ENCODE measurements at regions of chr14 and their contacts with region 1.

Region 1: GRCh38 chr14:51780006-51780692 is 80.3 kb upstream of the GNG2 start:
- DNase-seq: peak; percentile 51 to 87 (median 65)
- ATAC-seq: peak; percentile 71
- H3K4me3 ChIP-seq: no peak overlapping the region
- H3K4me3 Mint-ChIP-seq: no peak overlapping the region
- H3K27ac ChIP-seq: no peak overlapping the region
- H3K27ac Mint-ChIP-seq: no peak overlapping the region
- H3K4me1 ChIP-seq: peaks cover 13% of the 10 kb centered on the region
- H3K4me1 Mint-ChIP-seq: peaks cover 28% of the 10 kb centered on the region
- H3K27me3 ChIP-seq: peaks cover 0 to 3% of the 10 kb centered on the region in 2 experiments
- H3K27me3 Mint-ChIP-seq: peaks cover 12% of the 10 kb centered on the region
- CTCF ChIP-seq: peak; percentile 87

Region 2: DNA sequence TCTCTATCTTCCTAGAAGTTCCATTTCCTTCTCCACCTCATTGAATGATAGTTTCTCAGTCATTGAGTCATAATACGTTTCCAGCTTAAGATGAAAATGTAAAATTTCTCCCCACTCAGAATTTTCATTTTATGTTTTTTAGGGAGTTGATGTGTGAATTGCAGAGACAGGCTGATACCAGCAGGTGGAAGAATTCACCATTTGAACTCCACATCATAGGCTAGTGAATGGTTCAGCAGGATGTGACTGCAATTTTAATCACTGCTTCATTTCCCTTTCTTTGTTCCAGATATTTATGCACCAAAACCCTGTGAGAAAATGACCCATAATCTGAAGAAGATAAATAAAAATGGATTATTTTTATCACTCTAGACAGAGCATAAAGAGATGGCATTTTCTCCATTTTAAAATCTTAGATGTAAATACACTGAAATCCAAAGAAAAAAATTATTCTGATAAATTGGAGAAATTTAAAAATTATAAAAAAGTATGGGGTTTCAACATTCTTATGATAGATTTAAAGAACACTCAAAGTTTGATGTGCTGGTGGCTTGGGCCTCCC is 825.3 kb before region 1 on chr14:
- CTCF ChIA-PET with region 1: no interaction called
- POLR2A ChIA-PET with region 1: no interaction called
- intact Hi-C with region 1: loop called (anchors 5 to 10 kb)
- DNase-seq: peak in 3 of 14 experiments; percentile 16 to 40 (median 33)
- ATAC-seq: no peak
- H3K4me3 ChIP-seq: no peak overlapping the region
- H3K4me3 Mint-ChIP-seq: no peak overlapping the region
- H3K27ac ChIP-seq: no peak overlapping the region
- H3K27ac Mint-ChIP-seq: no peak overlapping the region
- H3K4me1 ChIP-seq: no peaks in the 10 kb centered on the region
- H3K4me1 Mint-ChIP-seq: no peaks in the 10 kb centered on the region
- H3K27me3 ChIP-seq: no peaks in the 10 kb centered on the region
- H3K27me3 Mint-ChIP-seq: no peaks in the 10 kb centered on the region
- CTCF ChIP-seq: peak; percentile 32

Region 3: DNA sequence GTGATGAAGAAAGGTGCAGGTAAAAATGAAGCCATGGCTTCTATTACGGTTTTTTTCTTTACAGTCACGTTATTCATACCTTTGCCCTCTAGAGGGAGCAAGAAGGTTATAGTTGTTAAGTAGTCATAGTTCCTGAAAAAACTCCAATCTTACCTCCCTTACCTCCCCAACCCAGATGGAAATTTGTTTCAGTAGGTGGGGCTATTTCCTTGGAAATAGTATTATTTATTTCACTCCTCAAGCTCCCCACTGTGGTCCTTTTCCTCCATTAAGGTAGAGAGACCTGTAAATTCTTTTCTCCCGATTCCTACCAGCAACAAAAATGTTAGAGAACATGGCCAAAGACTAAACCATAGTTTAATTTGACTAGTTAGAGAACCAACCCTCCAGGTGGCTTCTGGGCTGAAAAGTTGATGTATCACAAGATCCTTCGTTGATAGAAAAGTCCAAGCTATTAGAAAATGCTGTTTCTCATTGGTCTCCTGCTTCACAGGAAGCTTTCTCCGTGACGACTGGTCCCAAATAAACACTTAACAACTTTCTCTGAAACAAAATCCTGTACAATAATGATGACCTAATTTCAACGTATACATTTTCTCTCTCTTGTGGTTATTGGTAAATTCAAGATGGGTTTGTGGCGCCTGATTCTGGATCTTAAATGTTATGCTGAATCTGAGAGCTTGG is 496.6 kb before region 1 on chr14:
- CTCF ChIA-PET with region 1: no interaction called
- POLR2A ChIA-PET with region 1: no interaction called
- intact Hi-C with region 1: loop called (anchors 1 kb)
- DNase-seq: peak in 3 of 14 experiments; percentile 56 to 62 (median 56)
- ATAC-seq: peak; percentile 49
- H3K4me3 ChIP-seq: no peak overlapping the region
- H3K4me3 Mint-ChIP-seq: no peak overlapping the region
- H3K27ac ChIP-seq: no peak overlapping the region
- H3K27ac Mint-ChIP-seq: no peak overlapping the region
- H3K4me1 ChIP-seq: no peaks in the 10 kb centered on the region
- H3K4me1 Mint-ChIP-seq: no peaks in the 10 kb centered on the region
- H3K27me3 ChIP-seq: no peaks in the 10 kb centered on the region
- H3K27me3 Mint-ChIP-seq: no peaks in the 10 kb centered on the region
- CTCF ChIP-seq: peak; percentile 84

Region 4: GRCh38 chr14:51369814-51370213 is 410.3 kb before region 1 on chr14:
- CTCF ChIA-PET with region 1: no interaction called
- POLR2A ChIA-PET with region 1: no interaction called
- intact Hi-C with region 1: loop called in 1 of 2 experiments (anchors 5 kb)
- DNase-seq: peak in 4 of 14 experiments; percentile 10 to 29 (median 26)
- ATAC-seq: no peak
- H3K4me3 ChIP-seq: no peak overlapping the region
- H3K4me3 Mint-ChIP-seq: no peak overlapping the region
- H3K27ac ChIP-seq: no peak overlapping the region
- H3K27ac Mint-ChIP-seq: no peak overlapping the region
- H3K4me1 ChIP-seq: no peaks in the 10 kb centered on the region
- H3K4me1 Mint-ChIP-seq: no peaks in the 10 kb centered on the region
- H3K27me3 ChIP-seq: peaks cover 0 to 1% of the 10 kb centered on the region in 2 experiments
- H3K27me3 Mint-ChIP-seq: peaks cover 10% of the 10 kb centered on the region
- CTCF ChIP-seq: peak; percentile 34

Region 5: DNA sequence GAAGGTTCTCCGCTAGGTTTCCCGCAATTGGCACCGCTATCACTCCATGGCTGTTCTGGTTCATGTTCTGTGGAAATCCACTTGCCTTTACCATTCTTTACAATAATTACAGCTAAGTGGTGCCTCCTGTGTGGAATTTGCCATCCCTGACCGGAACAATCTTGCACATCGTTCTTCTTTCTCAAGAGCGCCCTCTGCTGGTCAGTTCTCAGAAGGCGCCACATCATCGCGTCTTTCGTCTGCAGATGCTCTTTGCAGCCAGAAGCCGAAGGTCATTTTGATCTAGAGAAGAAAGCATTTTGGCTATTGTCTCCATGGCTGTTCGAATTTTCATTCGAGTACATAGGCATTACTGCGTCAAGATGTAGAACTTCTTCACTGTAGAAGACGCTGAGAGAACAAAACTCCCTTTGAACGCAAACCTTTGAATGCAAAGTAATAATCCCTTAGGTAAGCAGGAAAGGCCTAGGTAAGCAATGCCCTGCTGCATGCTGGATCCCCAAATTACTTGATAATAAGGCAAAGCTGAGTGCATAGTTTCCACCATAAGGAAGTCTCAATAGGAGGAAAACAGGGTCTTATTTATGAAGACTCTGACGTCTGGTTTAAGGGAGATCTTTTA is 199.1 kb after region 1 on chr14:
- CTCF ChIA-PET with region 1: interaction called, 7 read pairs
- POLR2A ChIA-PET with region 1: no interaction called
- intact Hi-C with region 1: loop called in 1 of 2 experiments (anchors 2 kb)
- DNase-seq: peak; percentile 66 to 90 (median 80)
- ATAC-seq: peak; percentile 91
- H3K4me3 ChIP-seq: no peak overlapping the region
- H3K4me3 Mint-ChIP-seq: no peak overlapping the region
- H3K27ac ChIP-seq: no peak overlapping the region
- H3K27ac Mint-ChIP-seq: no peak overlapping the region
- H3K4me1 ChIP-seq: peaks cover 8% of the 10 kb centered on the region
- H3K4me1 Mint-ChIP-seq: peaks cover 7% of the 10 kb centered on the region
- H3K27me3 ChIP-seq: no peaks in the 10 kb centered on the region
- H3K27me3 Mint-ChIP-seq: no peaks in the 10 kb centered on the region
- CTCF ChIP-seq: peak; percentile 98